Activated CD4-positive, alpha-beta T cell treated with anti-CD3 and anti-CD28 coated beads for 36 hours (primary cell): ENCODE measurements at regions of chr19 and their contacts with region 1.

Region 1: DNA sequence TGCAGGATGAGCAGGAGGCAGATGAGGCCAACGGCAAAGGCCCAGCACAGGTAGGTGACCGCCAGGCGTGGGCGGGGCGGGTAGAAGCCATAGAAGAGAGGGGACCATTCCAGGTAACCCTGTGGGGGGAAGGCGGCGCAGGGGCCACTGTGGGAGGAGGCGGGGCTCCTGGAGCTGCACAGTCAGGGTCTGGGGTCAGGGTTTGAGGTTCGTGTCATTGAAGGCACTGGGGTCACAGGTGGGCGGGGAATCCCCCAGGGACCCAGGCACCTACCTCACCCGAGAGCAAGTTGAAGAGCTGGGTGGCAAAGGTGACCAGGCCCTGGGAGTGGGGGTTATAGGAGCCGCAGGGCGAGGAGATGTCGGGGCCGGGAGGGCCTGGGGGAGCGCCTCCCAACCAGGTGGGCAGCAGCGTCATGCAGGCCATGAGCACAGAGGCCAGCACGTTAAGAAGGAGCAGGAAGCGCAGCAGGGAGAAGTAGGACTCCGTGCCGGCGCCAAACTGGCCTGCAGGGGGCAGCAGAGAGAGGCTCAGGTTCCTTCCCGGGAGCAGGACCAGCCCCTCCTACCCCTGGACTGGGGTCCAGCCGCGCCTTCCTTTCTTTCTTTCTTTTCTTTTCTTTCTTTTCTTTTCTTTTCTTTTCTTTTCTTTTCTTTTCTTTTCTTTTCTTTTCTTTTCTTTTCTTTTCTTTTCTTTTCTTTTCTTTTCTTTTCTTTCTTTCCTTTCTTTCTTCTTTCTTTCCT is 4.6 kb downstream of the TMC4 start:
- DNase-seq: peak; percentile 96
- ATAC-seq: peak; percentile 93
- H3K4me3 Mint-ChIP-seq: no peak overlapping the region
- H3K27ac Mint-ChIP-seq: no peak overlapping the region
- H3K4me1 Mint-ChIP-seq: peaks cover 19% of the 10 kb centered on the region
- H3K27me3 Mint-ChIP-seq: peaks cover 5% of the 10 kb centered on the region

Region 2: GRCh38 chr19:54231077-54231931 is 63.0 kb after region 1 on chr19:
- CTCF ChIA-PET with region 1: interaction called, 7 read pairs
- POLR2A ChIA-PET with region 1: no interaction called
- intact Hi-C with region 1: loop called (anchors 1 kb)
- DNase-seq: peak; percentile 92
- ATAC-seq: peak; percentile 99
- H3K4me3 Mint-ChIP-seq: no peak overlapping the region
- H3K27ac Mint-ChIP-seq: no peak overlapping the region
- H3K4me1 Mint-ChIP-seq: peaks cover 6% of the 10 kb centered on the region
- H3K27me3 Mint-ChIP-seq: peaks cover 22% of the 10 kb centered on the region

Region 3: GRCh38 chr19:54266133-54266532 is 97.8 kb after region 1 on chr19:
- CTCF ChIA-PET with region 1: interaction called, 15 read pairs
- POLR2A ChIA-PET with region 1: no interaction called
- intact Hi-C with region 1: loop called in 1 of 2 experiments (anchors 1 kb)
- DNase-seq: peak; percentile 88
- ATAC-seq: peak; percentile 74
- H3K4me3 Mint-ChIP-seq: no peak overlapping the region
- H3K27ac Mint-ChIP-seq: no peak overlapping the region
- H3K4me1 Mint-ChIP-seq: no peaks in the 10 kb centered on the region
- H3K27me3 Mint-ChIP-seq: peaks cover 24% of the 10 kb centered on the region

Region 4: GRCh38 chr19:54316746-54317107 is 148.4 kb after region 1 on chr19:
- CTCF ChIA-PET with region 1: interaction called, 3 read pairs
- POLR2A ChIA-PET with region 1: no interaction called
- intact Hi-C with region 1: loop called in 1 of 2 experiments (anchors 2 kb)
- DNase-seq: no peak
- ATAC-seq: no peak
- H3K4me3 Mint-ChIP-seq: no peak overlapping the region
- H3K27ac Mint-ChIP-seq: no peak overlapping the region
- H3K4me1 Mint-ChIP-seq: no peaks in the 10 kb centered on the region
- H3K27me3 Mint-ChIP-seq: peaks cover 13% of the 10 kb centered on the region